ENCODE measurements at regions of chr14 and their contacts with region 1.

Region 1: GRCh38 chr14:74816124-74816523 is 53.0 kb downstream of the YLPM1 start:
- DNase-seq: no peak
- H3K4me3 ChIP-seq: no peak overlapping the region
- CTCF ChIP-seq: no peak

Region 2: GRCh38 chr14:74804219-74804826 is 11.8 kb before region 1 on chr14:
- CTCF ChIA-PET with region 1: interaction called, 12 read pairs
- POLR2A ChIA-PET with region 1: no interaction called
- DNase-seq: peak; percentile 9
- H3K4me3 ChIP-seq: no peak overlapping the region
- CTCF ChIP-seq: peak; percentile 60

Region 3: DNA sequence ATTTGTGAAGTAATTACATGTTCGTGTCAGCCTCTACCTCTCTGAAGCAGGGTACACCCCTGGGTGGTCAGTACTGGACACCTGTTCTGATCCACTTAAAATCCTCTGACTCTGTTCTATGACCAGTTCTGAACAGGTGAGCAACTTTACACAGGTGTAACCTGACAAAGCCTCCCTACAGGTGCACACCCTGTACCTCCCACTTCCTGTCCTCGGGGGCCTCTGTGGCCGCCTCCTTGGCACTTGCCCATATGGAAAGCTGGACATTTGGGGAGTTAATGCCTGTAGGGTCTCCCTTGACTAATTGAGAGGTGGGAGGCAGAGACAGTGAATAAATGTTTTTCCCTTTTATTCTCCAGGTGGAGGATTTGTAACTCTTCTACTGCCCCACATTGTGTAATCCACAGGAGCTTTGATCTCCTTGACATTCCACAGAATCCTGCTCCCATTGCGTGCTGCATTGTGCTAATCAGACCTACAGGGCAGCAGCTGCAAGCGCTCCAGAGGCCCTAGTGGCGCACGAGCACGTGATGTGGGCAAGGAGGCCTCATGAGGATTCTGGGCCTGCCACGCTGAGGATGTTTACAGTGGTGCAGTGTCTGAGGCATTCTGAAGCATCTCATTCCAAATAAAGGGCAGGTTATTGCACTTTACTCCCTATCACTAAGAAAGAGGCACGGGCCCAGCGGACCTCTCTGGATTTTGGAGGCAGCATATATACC is 660.3 kb after region 1 on chr14:
- CTCF ChIA-PET with region 1: no interaction called
- POLR2A ChIA-PET with region 1: no interaction called
- DNase-seq: no peak
- H3K4me3 ChIP-seq: no peak overlapping the region
- CTCF ChIP-seq: no peak